ENCODE measurements at regions of chrX and their contacts with region 1.

Region 1: DNA sequence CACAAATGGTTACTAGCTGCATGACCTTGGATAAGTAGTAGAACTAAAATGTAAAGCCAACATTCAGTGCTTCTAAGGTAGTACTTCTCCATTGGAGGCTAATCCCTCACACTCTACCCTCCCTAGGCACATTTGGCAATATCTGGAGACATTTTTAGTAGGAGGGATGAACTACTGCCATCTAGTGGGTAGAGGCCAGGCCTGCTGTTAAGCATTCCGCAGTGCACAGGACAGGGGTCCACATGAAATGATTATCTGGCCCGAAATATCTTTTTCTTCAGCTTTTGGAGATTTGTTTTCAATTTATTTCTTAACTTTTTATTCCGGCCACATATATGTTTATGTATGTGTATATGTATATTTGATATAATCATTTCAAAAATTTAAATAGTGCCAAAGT is 36.0 kb upstream of the SPANXC start:
- DNase-seq: no peak
- ATAC-seq: no peak
- H3K4me3 ChIP-seq: no peak overlapping the region
- H3K27ac ChIP-seq: no peak overlapping the region
- H3K4me1 ChIP-seq: no peaks in the 10 kb centered on the region
- H3K27me3 ChIP-seq: no peaks in the 10 kb centered on the region
- CTCF ChIP-seq: peak in 11 of 12 donors; percentile 15 to 49 (median 29)
- POLR2A ChIP-seq: no peak

Region 2: GRCh38 chrX:140762061-140762460 is 516.2 kb before region 1 on chrX:
- intact Hi-C with region 1: loop called in 1 of 10 experiments (anchors 10 kb)
- DNase-seq: peak in 3 of 5 donors; percentile 17 to 39 (median 20)
- ATAC-seq: peak in 2 of 4 donors; percentile 70 to 72
- H3K4me3 ChIP-seq: no peak overlapping the region
- H3K27ac ChIP-seq: no peak overlapping the region
- H3K4me1 ChIP-seq: no peaks in the 10 kb centered on the region
- H3K27me3 ChIP-seq: peaks cover 0 to 43% (median 0%) of the 10 kb centered on the region in 9 donors
- CTCF ChIP-seq: peak; percentile 34 to 69 (median 52)
- POLR2A ChIP-seq: no peak

Region 3: DNA sequence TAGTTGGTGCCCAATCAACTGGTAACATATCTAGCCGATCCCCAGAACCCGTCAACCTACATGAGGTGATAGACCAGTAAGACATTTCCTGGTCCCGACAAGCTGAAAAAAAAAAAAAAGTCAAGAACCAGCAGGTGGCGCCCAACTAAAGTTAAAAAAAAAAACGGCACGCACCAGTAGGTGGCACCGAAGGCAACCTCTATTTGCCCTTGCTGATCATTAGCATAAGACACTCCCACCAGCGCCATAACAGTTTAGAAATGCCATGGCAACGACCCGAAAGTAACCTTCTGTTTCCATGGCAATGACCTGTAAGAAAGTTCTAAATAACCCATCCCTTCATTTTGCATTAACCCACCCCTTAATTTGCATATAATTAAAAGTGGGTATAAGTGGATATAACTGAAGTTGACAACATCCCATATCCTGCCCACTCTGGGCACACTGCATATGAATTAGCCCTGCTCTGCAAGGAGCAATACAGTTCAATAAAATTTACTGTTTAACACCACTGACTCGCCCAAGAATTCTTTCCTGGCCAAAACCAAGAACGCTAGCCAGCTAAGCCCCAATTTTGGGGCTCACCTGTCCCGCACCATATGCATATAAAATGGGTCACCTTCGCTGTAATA is 359.8 kb before region 1 on chrX:
- intact Hi-C with region 1: loop called in 1 of 10 experiments (anchors 10 kb)
- DNase-seq: no peak
- ATAC-seq: no peak
- H3K4me3 ChIP-seq: no peak overlapping the region
- H3K27ac ChIP-seq: no peak overlapping the region
- H3K4me1 ChIP-seq: no peaks in the 10 kb centered on the region
- H3K27me3 ChIP-seq: peaks cover 0 to 7% (median 0%) of the 10 kb centered on the region in 9 donors
- CTCF ChIP-seq: peak in 9 of 12 donors; percentile 8 to 54 (median 35)
- POLR2A ChIP-seq: no peak

Measured in heart left ventricle (tissue), 16 donors.